GM12878 (cell line): ENCODE measurements at regions of chr3 and their contacts with region 1.

Region 1: GRCh38 chr3:47961815-47962618 is 54.2 kb downstream of the MAP4 start:
- DNase-seq: no peak
- ATAC-seq: peak; percentile 49
- H3K4me3 ChIP-seq: no peak overlapping the region
- H3K27ac ChIP-seq: peak overlapping the region; percentile 20; the same call in 1 of the 2 replicates
- H3K4me1 ChIP-seq: peaks cover 31% of the 10 kb centered on the region
- H3K27me3 ChIP-seq: no peaks in the 10 kb centered on the region
- CTCF ChIP-seq: no peak
- EP300 ChIP-seq: no peak
- POLR2A ChIP-seq: no peak
- RAD21 ChIP-seq: no peak

Region 2: GRCh38 chr3:47890828-47891612 is 71.0 kb before region 1 on chr3:
- CTCF ChIA-PET with region 1: no interaction called
- POLR2A ChIA-PET with region 1: interaction called, 11 read pairs
- RAD21 ChIA-PET with region 1: no interaction called
- SMC1A ChIA-PET with region 1: no interaction called
- in situ Hi-C with region 1: no loop called
- intact Hi-C with region 1: no loop called
- DNase-seq: no peak
- ATAC-seq: no peak
- H3K4me3 ChIP-seq: no peak overlapping the region
- H3K27ac ChIP-seq: no peak overlapping the region
- H3K4me1 ChIP-seq: 0 out of 2 replicates have a peak, but pooled peaks cover 3% of the 10 kb centered on the region
- H3K27me3 ChIP-seq: no peaks in the 10 kb centered on the region
- CTCF ChIP-seq: no peak
- EP300 ChIP-seq: no peak
- POLR2A ChIP-seq: no peak
- RAD21 ChIP-seq: no peak

Region 3: DNA sequence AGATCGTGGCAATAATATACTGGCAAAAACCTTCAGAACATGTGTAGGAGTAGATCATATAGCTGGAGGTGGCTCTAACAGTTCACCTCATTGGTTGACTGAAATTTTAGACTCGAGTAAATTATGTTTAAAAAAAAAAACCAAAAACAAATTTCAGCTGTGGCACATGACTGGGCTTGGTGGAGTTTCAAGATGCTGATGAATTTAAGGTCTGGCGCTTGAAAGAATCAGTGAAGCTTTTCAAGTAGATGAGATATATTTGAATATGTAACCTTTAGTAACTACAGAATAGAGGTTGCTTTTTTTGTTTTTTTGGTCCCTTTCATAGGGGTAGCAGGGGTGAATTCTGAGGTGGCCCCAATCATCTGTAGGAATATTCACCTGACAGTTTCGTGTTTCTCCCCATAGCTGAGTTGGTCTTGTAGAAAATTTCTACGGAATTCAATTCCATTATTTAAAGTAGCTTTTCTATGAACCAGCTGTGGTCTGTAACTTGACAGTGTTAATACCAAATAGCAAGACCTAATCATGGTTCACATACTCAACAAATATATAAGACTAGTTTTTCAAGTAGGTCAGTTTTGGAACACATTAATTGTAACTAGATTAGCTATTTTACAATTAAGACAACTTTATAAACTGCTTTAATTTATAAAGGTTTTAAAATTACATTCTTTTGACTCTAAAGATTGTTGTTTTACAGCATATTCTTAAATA is 11.4 kb before region 1 on chr3:
- CTCF ChIA-PET with region 1: interaction called, 5 read pairs
- POLR2A ChIA-PET with region 1: no interaction called
- RAD21 ChIA-PET with region 1: interaction called, 4 read pairs
- SMC1A ChIA-PET with region 1: interaction called, 12 read pairs
- in situ Hi-C with region 1: no loop called
- intact Hi-C with region 1: no loop called
- DNase-seq: no peak
- ATAC-seq: peak; percentile 60
- H3K4me3 ChIP-seq: no peak overlapping the region
- H3K27ac ChIP-seq: no peak overlapping the region
- H3K4me1 ChIP-seq: peaks cover 4% of the 10 kb centered on the region; the same call in 1 of the 2 replicates
- H3K27me3 ChIP-seq: no peaks in the 10 kb centered on the region
- CTCF ChIP-seq: no peak
- EP300 ChIP-seq: no peak
- POLR2A ChIP-seq: no peak
- RAD21 ChIP-seq: no peak

Region 4: GRCh38 chr3:48077815-48078214 is 115.8 kb after region 1 on chr3:
- CTCF ChIA-PET with region 1: no interaction called
- POLR2A ChIA-PET with region 1: no interaction called
- RAD21 ChIA-PET with region 1: no interaction called
- SMC1A ChIA-PET with region 1: no interaction called
- in situ Hi-C with region 1: no loop called
- intact Hi-C with region 1: no loop called
- DNase-seq: no peak
- ATAC-seq: no peak
- H3K4me3 ChIP-seq: no peak overlapping the region
- H3K27ac ChIP-seq: no peak overlapping the region
- H3K4me1 ChIP-seq: no peaks in the 10 kb centered on the region
- H3K27me3 ChIP-seq: no peaks in the 10 kb centered on the region
- CTCF ChIP-seq: no peak
- EP300 ChIP-seq: no peak
- POLR2A ChIP-seq: no peak
- RAD21 ChIP-seq: no peak